Right ventricle myocardium inferior (tissue), 1 donor: ENCODE measurements at regions of chr5 and their contacts with region 1.

Region 1: GRCh38 chr5:83430130-83431010 is 41.2 kb upstream of the VCAN start:
- DNase-seq: no peak
- ATAC-seq: peak; percentile 83

Region 2: GRCh38 chr5:83076742-83077661 is 353.4 kb before region 1 on chr5 and contains the starts of genes TMEM167A and XRCC4:
- intact Hi-C with region 1: loop called (anchors 10 kb)
- DNase-seq: peak; percentile 98
- ATAC-seq: peak; percentile 100
- total RNA-seq, gene TMEM167A: 53.9 TPM
- total RNA-seq, gene XRCC4: 7.9 TPM

Region 3: DNA sequence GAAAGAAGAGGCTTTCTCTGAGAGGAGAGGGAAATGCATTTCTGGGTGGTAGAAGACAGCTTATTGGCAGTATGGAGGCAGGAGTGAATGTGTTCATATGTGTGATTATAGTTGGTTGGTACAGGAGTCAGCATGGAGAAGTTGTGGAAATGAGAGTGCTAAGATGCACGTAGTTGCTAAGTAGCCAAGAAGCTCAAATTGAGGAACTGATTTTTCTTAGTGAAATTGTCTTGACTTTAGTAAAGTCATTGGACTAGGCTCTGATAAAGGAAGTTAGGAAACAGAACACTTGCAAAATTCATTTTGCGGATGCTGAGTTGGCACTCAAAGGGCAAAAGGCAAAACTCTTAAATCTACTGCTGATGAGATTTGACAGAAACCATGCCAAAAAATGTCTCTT is 117.7 kb before region 1 on chr5:
- intact Hi-C with region 1: no loop called
- DNase-seq: no peak
- ATAC-seq: peak; percentile 54